Heart right ventricle (tissue), 16 donors: ENCODE measurements at regions of chr5 and their contacts with region 1.

Region 1: GRCh38 chr5:81292130-81292529 is 9.3 kb upstream of the ZCCHC9 start:
- DNase-seq: no peak
- ATAC-seq: no peak
- H3K4me3 ChIP-seq: no peak overlapping the region
- H3K27ac ChIP-seq: no peak overlapping the region
- H3K4me1 ChIP-seq: peaks cover 0 to 5% (median 0%) of the 10 kb centered on the region in 9 donors
- H3K27me3 ChIP-seq: no peaks in the 10 kb centered on the region
- CTCF ChIP-seq: no peak

Region 2: GRCh38 chr5:80686757-80687156 is 605.4 kb before region 1 on chr5:
- intact Hi-C with region 1: loop called in 1 of 10 experiments (anchors 10 kb)
- DNase-seq: no peak
- ATAC-seq: no peak
- H3K4me3 ChIP-seq: no peak overlapping the region
- H3K27ac ChIP-seq: no peak overlapping the region
- H3K4me1 ChIP-seq: no peaks in the 10 kb centered on the region
- H3K27me3 ChIP-seq: no peaks in the 10 kb centered on the region
- CTCF ChIP-seq: peak in 7 of 9 donors; percentile 26 to 54 (median 51)

Region 3: DNA sequence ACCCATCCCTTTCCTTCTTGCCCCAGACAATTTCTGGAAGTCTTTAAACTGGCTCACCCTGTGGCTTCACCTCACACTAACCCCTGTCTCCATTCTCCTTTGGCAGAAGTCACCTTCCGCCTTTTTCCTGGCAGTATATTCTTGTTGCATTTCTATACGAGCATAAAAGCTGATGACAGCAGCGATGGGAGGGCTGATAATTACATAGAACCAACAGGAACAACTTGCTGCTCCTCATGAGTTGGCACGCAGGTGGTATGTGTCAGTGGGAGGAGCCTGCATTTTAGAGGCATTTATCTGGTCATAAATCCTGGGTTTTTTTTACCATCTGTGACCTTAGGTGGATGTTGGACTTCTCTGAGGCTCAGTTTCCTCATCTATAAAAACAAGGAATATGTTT is 120.4 kb before region 1 on chr5:
- intact Hi-C with region 1: no loop called
- DNase-seq: no peak
- ATAC-seq: peak in 4 of 8 donors; percentile 42 to 52 (median 50)
- H3K4me3 ChIP-seq: no peak overlapping the region
- H3K27ac ChIP-seq: peak overlapping the region in 2 of 10 donors; percentile 17 to 64
- H3K4me1 ChIP-seq: peaks cover 0 to 21% (median 0%) of the 10 kb centered on the region in 9 donors
- H3K27me3 ChIP-seq: peaks cover 0 to 5% (median 0%) of the 10 kb centered on the region in 7 donors
- CTCF ChIP-seq: no peak

Region 4: DNA sequence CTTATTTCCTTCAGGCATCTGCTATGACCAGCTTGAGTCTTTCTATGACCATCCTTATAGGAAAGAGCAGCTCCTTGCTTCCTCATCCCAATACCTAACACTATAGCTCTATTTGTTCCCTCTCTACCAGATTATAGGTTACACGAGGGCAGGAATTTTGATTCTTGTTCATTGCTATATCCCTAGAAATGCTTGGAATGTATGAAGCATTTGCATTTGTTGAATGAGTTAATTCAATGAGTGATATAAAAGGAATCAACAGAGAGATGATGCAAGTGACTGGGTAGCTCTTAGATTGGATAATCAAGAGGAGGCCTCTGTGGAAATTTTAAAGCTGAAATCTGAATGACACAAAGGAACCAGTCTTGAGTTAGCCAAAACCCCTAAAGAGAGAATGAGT is 23.2 kb after region 1 on chr5:
- intact Hi-C with region 1: no loop called
- DNase-seq: no peak
- ATAC-seq: no peak
- H3K4me3 ChIP-seq: no peak overlapping the region
- H3K27ac ChIP-seq: no peak overlapping the region
- H3K4me1 ChIP-seq: no peaks in the 10 kb centered on the region
- H3K27me3 ChIP-seq: no peaks in the 10 kb centered on the region
- CTCF ChIP-seq: no peak